Right lobe of liver (tissue), 6 donors: ENCODE measurements at regions of chr16 and their contacts with region 1.

Region 1: GRCh38 chr16:28491970-28492474 is at the start of gene CLN3:
- DNase-seq: peak; percentile 91 to 96 (median 94)
- ATAC-seq: peak; percentile 91 to 92 (median 91)
- H3K4me3 ChIP-seq: peak within 1 kb of the TSS; percentile 57 to 86 (median 79)
- H3K27ac ChIP-seq: peak within 1 kb of the TSS; percentile 91 to 95 (median 91)
- H3K4me1 ChIP-seq: peaks cover 0 to 10% (median 2%) of the 10 kb centered on the region in 4 donors
- H3K27me3 ChIP-seq: no peaks in the 10 kb centered on the region
- CTCF ChIP-seq: no peak
- POLR2A ChIP-seq: no peak
- total RNA-seq, gene CLN3: 16.5 to 47.8 (median 30.7) TPM

Region 2: DNA sequence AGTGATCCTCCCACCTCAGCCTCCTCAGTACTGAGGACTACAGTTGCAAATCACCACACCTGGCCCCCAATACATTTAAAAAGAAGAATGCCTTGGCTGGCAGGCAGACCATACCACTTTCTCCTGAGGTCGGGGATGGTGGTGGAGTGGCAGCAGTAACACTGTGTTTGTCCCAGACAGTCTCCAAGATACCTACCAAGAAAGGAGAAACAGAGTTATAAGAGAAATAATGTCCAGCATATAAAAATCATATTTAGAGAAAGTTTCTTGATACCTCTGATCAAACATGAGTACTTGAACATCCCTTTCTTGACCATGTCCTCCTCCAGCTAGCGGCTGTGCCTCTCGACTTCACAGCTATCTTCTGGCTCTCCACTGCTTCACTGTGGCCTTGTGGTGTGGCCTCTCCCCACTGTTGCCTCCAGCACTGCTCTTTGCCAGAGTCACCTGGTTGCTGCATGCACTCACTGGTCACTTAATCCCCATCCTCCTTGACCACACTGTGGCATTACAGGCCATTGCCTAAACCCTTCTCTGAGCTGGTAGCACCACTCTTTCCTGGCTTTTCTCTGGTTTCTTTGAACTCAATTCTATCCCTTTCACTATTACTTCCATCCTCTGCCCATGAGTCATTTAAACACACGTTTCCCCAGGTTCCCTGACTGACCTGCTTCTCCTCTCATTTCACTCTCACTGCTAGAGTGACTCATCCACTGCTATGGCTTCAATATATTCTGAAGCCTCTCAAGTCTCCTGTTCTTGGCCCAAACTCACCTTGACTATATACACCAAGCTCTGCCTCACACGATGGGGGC is 325.4 kb before region 1 on chr16:
- intact Hi-C with region 1: no loop called
- DNase-seq: no peak
- ATAC-seq: peak in 1 of 4 donors; percentile 60
- H3K4me3 ChIP-seq: no peak overlapping the region
- H3K27ac ChIP-seq: no peak overlapping the region
- H3K4me1 ChIP-seq: no peaks in the 10 kb centered on the region
- H3K27me3 ChIP-seq: no peaks in the 10 kb centered on the region
- CTCF ChIP-seq: no peak
- POLR2A ChIP-seq: no peak

Region 3: DNA sequence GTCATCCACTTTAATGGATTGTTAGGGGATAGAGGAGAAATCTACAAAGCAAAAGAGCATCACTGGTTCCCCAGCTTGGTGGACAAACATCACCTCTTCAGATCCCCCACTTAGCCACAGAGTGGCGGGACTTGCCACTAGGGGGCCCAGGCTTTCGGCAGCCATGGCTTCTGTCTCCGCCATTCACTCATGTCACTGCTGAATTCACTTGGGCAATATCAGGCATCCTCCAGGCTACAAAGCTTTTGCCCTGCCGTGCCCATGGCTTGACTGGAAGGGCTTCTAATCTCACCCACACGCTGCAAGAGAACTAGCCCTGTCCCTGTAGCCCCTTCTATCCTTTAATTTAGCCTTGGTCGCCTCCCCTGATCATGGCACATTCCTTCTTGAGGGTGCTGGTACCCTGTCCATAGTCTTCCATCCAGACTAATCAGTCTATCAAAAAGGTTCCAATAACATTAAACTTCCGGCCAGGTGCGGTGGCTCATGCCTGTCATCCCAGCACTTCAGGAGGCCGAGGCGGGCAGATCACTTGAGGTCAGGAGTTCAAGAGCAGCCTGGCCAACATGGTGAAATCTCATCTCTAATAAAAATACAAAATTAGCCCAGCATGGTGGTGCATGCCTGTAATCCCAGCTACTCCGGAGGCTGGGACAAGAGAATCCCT is 164.9 kb before region 1 on chr16:
- intact Hi-C with region 1: no loop called
- DNase-seq: peak in 2 of 3 donors; percentile 66 to 67
- ATAC-seq: peak; percentile 89 to 95 (median 92)
- H3K4me3 ChIP-seq: no peak overlapping the region
- H3K27ac ChIP-seq: no peak overlapping the region
- H3K4me1 ChIP-seq: no peaks in the 10 kb centered on the region
- H3K27me3 ChIP-seq: no peaks in the 10 kb centered on the region
- CTCF ChIP-seq: peak; percentile 49 to 85 (median 80)
- POLR2A ChIP-seq: no peak

Region 4: GRCh38 chr16:28553776-28554633 is 62.0 kb after region 1 on chr16 and contains the start of gene SGF29:
- intact Hi-C with region 1: loop called in 1 of 2 experiments (anchors 10 kb)
- DNase-seq: peak; percentile 91 to 94 (median 93)
- ATAC-seq: peak; percentile 92 to 96 (median 94)
- H3K4me3 ChIP-seq: peak within 1 kb of the TSS; percentile 51 to 85 (median 81)
- H3K27ac ChIP-seq: peak within 1 kb of the TSS; percentile 89 to 98 (median 96)
- H3K4me1 ChIP-seq: peaks cover 0 to 12% (median 6%) of the 10 kb centered on the region in 4 donors
- H3K27me3 ChIP-seq: no peaks in the 10 kb centered on the region
- CTCF ChIP-seq: peak; percentile 5 to 54 (median 36)
- POLR2A ChIP-seq: peak; percentile 94
- total RNA-seq, gene SGF29: 14.5 to 17.9 (median 15.4) TPM